Sigmoid colon (tissue), 7 donors: ENCODE measurements at regions of chr13 and their contacts with region 1.

Region 1: GRCh38 chr13:30132623-30133553 is 174.5 kb downstream of the KATNAL1 start:
- DNase-seq: peak; percentile 99
- H3K4me3 ChIP-seq: peak overlapping the region in 1 of 4 donors; percentile 2
- H3K27ac ChIP-seq: peak overlapping the region in 3 of 4 donors; percentile 6 to 41 (median 7)
- H3K4me1 ChIP-seq: peaks cover 0 to 24% (median 15%) of the 10 kb centered on the region in 4 donors
- H3K27me3 ChIP-seq: no peaks in the 10 kb centered on the region
- CTCF ChIP-seq: peak; percentile 85 to 97 (median 94)
- EP300 ChIP-seq: no peak
- POLR2A ChIP-seq: no peak

Region 2: GRCh38 chr13:30114571-30115256 is 18.2 kb before region 1 on chr13:
- intact Hi-C with region 1: no loop called
- DNase-seq: peak; percentile 94
- H3K4me3 ChIP-seq: peak overlapping the region; percentile 30 to 65 (median 64)
- H3K27ac ChIP-seq: peak overlapping the region; percentile 47 to 78 (median 74)
- H3K4me1 ChIP-seq: peaks cover 0 to 53% (median 50%) of the 10 kb centered on the region in 4 donors
- H3K27me3 ChIP-seq: no peaks in the 10 kb centered on the region
- CTCF ChIP-seq: peak; percentile 79 to 90 (median 88)
- EP300 ChIP-seq: no peak
- POLR2A ChIP-seq: no peak

Region 3: GRCh38 chr13:30158774-30159445 is 26.0 kb after region 1 on chr13:
- intact Hi-C with region 1: loop called (anchors 1 kb)
- DNase-seq: peak; percentile 75
- H3K4me3 ChIP-seq: no peak overlapping the region
- H3K27ac ChIP-seq: no peak overlapping the region
- H3K4me1 ChIP-seq: no peaks in the 10 kb centered on the region
- H3K27me3 ChIP-seq: peaks cover 0 to 20% (median 0%) of the 10 kb centered on the region in 3 donors
- CTCF ChIP-seq: peak; percentile 23 to 44 (median 31)
- EP300 ChIP-seq: no peak
- POLR2A ChIP-seq: no peak

Region 4: DNA sequence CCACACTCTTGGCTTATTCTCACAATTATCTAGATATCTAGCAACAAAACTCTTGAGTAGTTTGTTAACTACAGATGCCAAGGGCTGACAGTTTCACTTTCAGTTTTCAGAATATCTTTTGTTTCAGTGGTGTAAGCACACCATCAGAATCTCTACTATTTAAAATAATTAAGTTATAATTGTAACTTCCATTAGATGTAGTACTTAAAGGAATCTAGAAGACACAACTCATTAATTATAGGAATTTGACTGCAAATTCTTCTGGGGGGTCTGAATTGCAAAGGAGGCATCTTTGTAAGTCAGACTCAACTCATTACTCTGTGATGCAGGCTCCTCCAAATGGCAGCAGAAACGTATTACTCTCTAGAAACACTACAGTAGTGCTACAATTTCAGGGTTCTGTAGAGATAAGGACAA is 440.0 kb after region 1 on chr13:
- intact Hi-C with region 1: loop called (anchors 5 kb)
- DNase-seq: no peak
- H3K4me3 ChIP-seq: peak overlapping the region; percentile 18 to 46 (median 38)
- H3K27ac ChIP-seq: peak overlapping the region; percentile 50 to 70 (median 66)
- H3K4me1 ChIP-seq: peaks cover 0 to 46% (median 26%) of the 10 kb centered on the region in 4 donors
- H3K27me3 ChIP-seq: no peaks in the 10 kb centered on the region
- CTCF ChIP-seq: no peak
- EP300 ChIP-seq: no peak
- POLR2A ChIP-seq: no peak

Region 5: GRCh38 chr13:30802953-30803478 is 670.1 kb after region 1 on chr13:
- intact Hi-C with region 1: loop called (anchors 2 kb)
- DNase-seq: peak; percentile 93
- H3K4me3 ChIP-seq: peak overlapping the region; percentile 17 to 50 (median 46)
- H3K27ac ChIP-seq: peak overlapping the region; percentile 36 to 76 (median 64)
- H3K4me1 ChIP-seq: peaks cover 0 to 30% (median 13%) of the 10 kb centered on the region in 4 donors
- H3K27me3 ChIP-seq: no peaks in the 10 kb centered on the region
- CTCF ChIP-seq: peak; percentile 87 to 94 (median 91)
- EP300 ChIP-seq: peak in 1 of 4 donors; percentile 3
- POLR2A ChIP-seq: no peak

Region 6: DNA sequence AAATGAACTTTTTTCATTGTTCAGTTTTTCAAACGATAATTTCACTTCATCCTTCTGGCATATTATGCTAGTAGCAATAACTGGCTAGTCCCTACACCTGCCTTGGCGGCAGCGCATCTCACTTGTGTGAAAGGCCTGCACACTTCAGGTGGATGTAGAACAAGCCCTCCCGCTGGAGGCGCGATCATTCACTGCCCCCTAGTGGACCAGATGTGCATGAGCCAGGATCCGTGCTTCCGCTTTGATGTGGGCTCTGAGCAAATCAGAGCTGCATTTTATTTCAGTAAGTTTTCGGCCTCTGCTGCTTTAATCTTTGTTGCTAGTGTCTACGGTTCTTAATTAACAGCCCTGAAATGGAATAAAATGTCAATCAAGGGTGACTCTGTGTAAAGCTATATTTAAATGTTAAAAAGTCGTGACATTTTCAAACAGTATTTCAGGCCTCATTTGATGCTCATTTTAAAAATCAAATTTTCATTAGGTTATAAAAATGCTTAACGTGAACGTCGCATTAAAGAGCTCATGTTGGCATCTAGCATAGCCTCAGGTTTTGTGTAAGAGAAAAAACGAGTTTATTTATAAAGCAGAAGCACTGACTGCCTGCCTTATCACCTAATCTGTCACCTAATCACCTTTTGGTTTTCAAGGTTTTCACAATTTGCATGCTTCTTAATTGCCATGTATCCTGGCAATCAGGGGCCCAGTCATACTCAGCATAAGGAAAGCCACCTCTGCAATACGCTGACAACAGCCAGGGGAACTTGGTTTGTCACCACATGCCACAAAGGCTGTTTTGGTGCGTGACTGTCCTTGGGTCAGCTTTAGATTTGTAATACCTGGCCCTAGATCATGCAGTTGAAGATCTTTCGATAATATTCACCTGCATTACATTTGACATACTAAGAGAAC is 911.7 kb after region 1 on chr13:
- intact Hi-C with region 1: loop called (anchors 5 kb)
- DNase-seq: peak; percentile 89
- H3K4me3 ChIP-seq: no peak overlapping the region
- H3K27ac ChIP-seq: no peak overlapping the region
- H3K4me1 ChIP-seq: peaks cover 0 to 28% (median 21%) of the 10 kb centered on the region in 4 donors
- H3K27me3 ChIP-seq: no peaks in the 10 kb centered on the region
- CTCF ChIP-seq: peak; percentile 50 to 95 (median 88)
- EP300 ChIP-seq: no peak
- POLR2A ChIP-seq: no peak